ENCODE measurements at regions of chr6 and their contacts with region 1.

Region 1: GRCh38 chr6:25992413-25993037 is 29.9 kb downstream of the TRIM38 start:
- DNase-seq: peak; percentile 95
- ATAC-seq: peak; percentile 97
- H3K4me3 Mint-ChIP-seq: peak overlapping the region; percentile 94
- H3K27ac Mint-ChIP-seq: peak overlapping the region; percentile 96
- H3K4me1 Mint-ChIP-seq: peaks cover 33% of the 10 kb centered on the region
- H3K27me3 Mint-ChIP-seq: no peaks in the 10 kb centered on the region

Region 2: GRCh38 chr6:25788305-25788922 is 204.1 kb before region 1 on chr6:
- CTCF ChIA-PET with region 1: interaction called, 10 read pairs
- DNase-seq: peak; percentile 46
- ATAC-seq: no peak
- H3K4me3 Mint-ChIP-seq: no peak overlapping the region
- H3K27ac Mint-ChIP-seq: no peak overlapping the region
- H3K4me1 Mint-ChIP-seq: peaks cover 8% of the 10 kb centered on the region
- H3K27me3 Mint-ChIP-seq: no peaks in the 10 kb centered on the region

Region 3: GRCh38 chr6:25962149-25963127 is 30.1 kb before region 1 on chr6 and contains the start of gene TRIM38:
- CTCF ChIA-PET with region 1: interaction called, 62 read pairs
- DNase-seq: peak; percentile 90
- ATAC-seq: peak; percentile 90
- H3K4me3 Mint-ChIP-seq: peak within 1 kb of the TSS; percentile 96
- H3K27ac Mint-ChIP-seq: peak within 1 kb of the TSS; percentile 99
- H3K4me1 Mint-ChIP-seq: peaks cover 75% of the 10 kb centered on the region
- H3K27me3 Mint-ChIP-seq: no peaks in the 10 kb centered on the region
- total RNA-seq, gene TRIM38: 19.0 to 28.2 TPM

Region 4: DNA sequence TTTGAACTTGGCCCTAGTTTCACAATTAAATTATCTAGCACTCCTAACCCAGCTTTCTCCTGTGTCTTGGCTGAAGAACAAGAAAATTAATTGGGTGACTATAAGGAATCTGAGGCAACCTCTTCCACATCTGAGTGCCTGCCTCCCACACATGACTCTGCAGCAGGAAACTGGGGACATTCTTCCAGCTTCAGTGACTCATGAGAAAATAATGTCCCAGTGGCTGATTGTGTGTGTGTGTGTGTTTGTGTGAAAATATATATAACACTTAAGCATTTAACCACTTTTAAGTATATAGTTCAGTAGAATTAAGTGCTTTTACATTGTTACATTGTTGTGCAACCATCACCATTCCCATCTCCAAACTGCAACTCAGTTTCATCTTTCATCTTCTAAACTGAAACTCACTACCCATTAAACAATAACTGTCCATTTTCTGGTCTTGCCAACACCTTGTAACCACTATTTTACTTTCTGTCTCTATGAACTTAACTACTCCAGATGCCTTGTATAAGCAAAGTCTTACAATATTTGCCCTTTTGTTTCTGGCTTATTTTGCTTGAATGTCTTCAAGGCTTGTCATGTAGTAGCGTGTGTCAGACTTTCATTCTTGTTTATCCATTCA is 21.2 kb before region 1 on chr6:
- CTCF ChIA-PET with region 1: interaction called, 62 read pairs
- DNase-seq: no peak
- ATAC-seq: no peak
- H3K4me3 Mint-ChIP-seq: no peak overlapping the region
- H3K27ac Mint-ChIP-seq: peak overlapping the region; percentile 25
- H3K4me1 Mint-ChIP-seq: peaks cover 56% of the 10 kb centered on the region
- H3K27me3 Mint-ChIP-seq: no peaks in the 10 kb centered on the region

Region 5: GRCh38 chr6:25981568-25982263 is 10.8 kb before region 1 on chr6:
- CTCF ChIA-PET with region 1: interaction called, 36 read pairs
- DNase-seq: no peak
- ATAC-seq: no peak
- H3K4me3 Mint-ChIP-seq: no peak overlapping the region
- H3K27ac Mint-ChIP-seq: no peak overlapping the region
- H3K4me1 Mint-ChIP-seq: peaks cover 12% of the 10 kb centered on the region
- H3K27me3 Mint-ChIP-seq: no peaks in the 10 kb centered on the region

Region 6: DNA sequence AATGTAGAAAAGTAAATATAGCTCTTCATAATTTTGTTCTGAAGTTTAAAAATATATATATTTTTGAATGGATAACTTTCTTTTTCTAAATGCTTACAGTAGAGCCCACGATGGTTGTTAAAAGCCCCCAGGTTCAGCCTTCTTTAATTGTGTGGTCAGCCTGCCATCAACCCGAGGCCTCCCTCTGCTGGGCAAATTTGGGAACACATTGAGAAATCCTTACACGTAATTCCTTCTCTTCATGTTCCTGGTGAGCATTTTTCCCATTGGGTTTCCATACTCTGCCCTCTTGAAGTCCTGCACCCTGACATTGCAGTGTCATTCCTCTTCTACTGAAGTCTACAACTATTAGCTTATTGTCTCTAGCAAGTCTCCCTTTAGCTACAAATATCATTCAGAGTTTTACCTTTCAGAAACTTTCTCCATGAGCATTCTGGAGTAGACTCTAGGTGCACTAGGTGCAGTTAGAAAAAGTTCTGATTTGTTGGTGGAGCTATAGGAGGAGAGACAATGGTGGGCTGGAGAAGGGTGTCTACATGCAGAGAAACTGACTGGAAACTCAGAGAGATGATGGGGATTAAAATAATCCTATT is 10.7 kb after region 1 on chr6:
- CTCF ChIA-PET with region 1: interaction called, 125 read pairs
- DNase-seq: peak; percentile 64
- ATAC-seq: peak; percentile 64
- H3K4me3 Mint-ChIP-seq: no peak overlapping the region
- H3K27ac Mint-ChIP-seq: no peak overlapping the region
- H3K4me1 Mint-ChIP-seq: no peaks in the 10 kb centered on the region
- H3K27me3 Mint-ChIP-seq: no peaks in the 10 kb centered on the region

Region 7: DNA sequence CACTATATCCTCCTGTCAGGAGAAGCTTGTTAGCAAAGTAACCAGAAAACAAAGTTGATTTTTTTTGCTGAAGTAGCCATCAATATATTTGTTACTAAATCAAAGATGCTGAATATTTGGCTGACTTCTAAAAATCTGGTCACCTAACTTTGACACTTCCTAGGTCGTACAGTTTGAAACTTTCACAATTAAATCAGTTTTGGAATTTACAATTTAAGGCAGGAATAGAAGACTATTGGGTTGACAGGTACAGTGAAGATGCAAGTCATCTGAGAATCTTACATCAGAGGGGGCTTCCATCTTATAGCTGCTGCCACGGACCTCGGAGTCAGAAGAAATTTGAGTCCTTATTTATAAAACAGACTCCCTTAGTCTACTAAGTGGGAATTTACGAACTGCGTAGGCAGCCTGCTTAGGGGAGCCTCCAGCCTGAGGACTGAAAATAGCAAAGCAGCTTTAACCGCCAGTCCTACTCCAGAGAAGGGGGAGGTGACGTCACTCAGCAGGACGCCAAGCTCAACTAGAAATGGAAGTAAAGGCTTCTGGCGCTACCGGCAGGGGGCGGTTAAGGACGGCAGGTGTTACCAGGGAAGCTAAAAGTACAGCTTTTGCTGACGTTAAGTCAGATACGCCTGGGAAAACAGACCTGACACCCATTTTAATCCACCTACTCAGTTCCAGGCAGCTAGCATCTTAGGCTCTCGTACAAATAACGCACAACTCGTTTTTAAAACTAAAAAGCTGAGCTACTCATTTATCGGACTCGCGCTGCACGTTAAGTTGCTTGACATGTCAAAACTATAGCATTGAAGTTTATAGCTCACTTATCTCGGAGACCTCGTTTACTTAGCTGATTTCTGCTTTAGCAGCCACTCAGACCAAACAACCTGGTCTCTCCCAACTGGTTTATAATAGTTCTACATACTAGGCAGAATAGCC is 33.6 kb after region 1 on chr6:
- CTCF ChIA-PET with region 1: interaction called, 78 read pairs
- DNase-seq: peak; percentile 97
- ATAC-seq: peak; percentile 37
- H3K4me3 Mint-ChIP-seq: peak overlapping the region; percentile 83
- H3K27ac Mint-ChIP-seq: peak overlapping the region; percentile 99
- H3K4me1 Mint-ChIP-seq: peaks cover 81% of the 10 kb centered on the region
- H3K27me3 Mint-ChIP-seq: peaks cover 4% of the 10 kb centered on the region